ENCODE measurements at regions of chr12 and their contacts with region 1.

Region 1: DNA sequence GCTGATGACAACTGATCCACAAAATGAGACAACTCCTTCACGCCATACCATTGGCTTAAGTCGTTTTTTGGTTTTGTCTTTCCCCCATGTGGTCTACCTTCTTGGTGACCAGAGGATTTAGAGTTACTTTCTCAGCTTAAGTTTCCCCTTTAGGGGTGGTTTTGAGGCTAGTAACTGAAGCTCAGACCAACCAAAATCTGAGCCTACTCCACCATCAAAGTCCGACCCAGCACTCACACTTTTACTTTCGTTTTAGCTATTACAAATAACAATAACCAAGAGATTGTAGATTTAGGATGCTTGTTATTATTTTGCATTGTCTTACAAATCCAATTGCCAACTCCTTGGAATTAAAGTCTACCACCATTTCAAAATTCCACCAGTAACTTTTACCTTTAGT is 130.6 kb upstream of the MDM1 start:
- DNase-seq: peak in 1 of 35 experiments; percentile 51
- ATAC-seq: peak in 2 of 4 experiments; percentile 38 to 62
- H3K4me3 ChIP-seq: peak overlapping the region; percentile 25 to 42
- H3K4me3 Mint-ChIP-seq: peak overlapping the region; percentile 76 to 83 (median 76)
- H3K27ac ChIP-seq: peak overlapping the region; percentile 59
- H3K27ac Mint-ChIP-seq: peak overlapping the region; percentile 92 to 94
- H3K4me1 ChIP-seq: peaks cover 0 to 4% of the 10 kb centered on the region in 2 experiments
- H3K4me1 Mint-ChIP-seq: peaks cover 16 to 24% (median 21%) of the 10 kb centered on the region in 3 donors
- H3K27me3 ChIP-seq: no peaks in the 10 kb centered on the region
- H3K27me3 Mint-ChIP-seq: no peaks in the 10 kb centered on the region

Region 2: DNA sequence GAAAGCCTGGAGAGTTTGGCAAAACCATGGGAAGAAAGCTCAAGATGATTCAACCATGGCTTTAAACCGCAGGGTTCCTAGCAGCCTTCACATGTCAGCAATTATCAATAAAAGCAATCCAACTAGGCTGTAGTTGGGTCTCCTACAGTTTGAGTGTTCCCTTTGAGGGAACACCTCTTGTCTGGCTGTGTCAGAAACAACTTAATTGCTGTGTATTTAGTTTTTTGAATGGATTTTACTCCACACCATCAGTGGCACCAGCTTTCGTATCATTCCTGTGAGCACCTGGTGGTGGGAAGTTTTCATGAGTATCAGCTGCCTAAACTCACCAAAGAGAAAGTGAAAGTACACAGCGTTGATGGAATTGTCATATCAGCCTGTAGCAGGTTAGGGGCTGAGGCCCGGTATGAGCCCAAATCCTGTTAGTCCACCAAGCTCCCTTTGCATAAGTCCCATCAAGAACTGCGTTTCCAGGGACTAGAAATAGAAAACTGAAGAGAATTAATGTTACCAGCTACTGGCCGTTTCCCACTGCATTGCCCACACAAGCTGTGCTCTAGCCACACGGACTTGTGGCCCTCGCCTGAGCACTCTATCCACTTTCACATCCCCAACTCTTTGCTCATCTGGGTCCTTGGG is 226.3 kb before region 1 on chr12:
- CTCF ChIA-PET with region 1: no interaction called
- POLR2A ChIA-PET with region 1: interaction called in 1 of 2 experiments, 10 read pairs
- DNase-seq: peak in 32 of 35 experiments; percentile 6 to 80 (median 18)
- ATAC-seq: peak; percentile 73 to 78 (median 75)
- H3K4me3 ChIP-seq: peak overlapping the region; percentile 42 to 49
- H3K4me3 Mint-ChIP-seq: peak overlapping the region; percentile 84 to 86 (median 85)
- H3K27ac ChIP-seq: peak overlapping the region; percentile 52
- H3K27ac Mint-ChIP-seq: peak overlapping the region; percentile 91 to 97
- H3K4me1 ChIP-seq: peaks cover 18 to 26% of the 10 kb centered on the region in 2 experiments
- H3K4me1 Mint-ChIP-seq: peaks cover 48 to 56% (median 50%) of the 10 kb centered on the region in 3 donors
- H3K27me3 ChIP-seq: no peaks in the 10 kb centered on the region
- H3K27me3 Mint-ChIP-seq: no peaks in the 10 kb centered on the region

Region 3: DNA sequence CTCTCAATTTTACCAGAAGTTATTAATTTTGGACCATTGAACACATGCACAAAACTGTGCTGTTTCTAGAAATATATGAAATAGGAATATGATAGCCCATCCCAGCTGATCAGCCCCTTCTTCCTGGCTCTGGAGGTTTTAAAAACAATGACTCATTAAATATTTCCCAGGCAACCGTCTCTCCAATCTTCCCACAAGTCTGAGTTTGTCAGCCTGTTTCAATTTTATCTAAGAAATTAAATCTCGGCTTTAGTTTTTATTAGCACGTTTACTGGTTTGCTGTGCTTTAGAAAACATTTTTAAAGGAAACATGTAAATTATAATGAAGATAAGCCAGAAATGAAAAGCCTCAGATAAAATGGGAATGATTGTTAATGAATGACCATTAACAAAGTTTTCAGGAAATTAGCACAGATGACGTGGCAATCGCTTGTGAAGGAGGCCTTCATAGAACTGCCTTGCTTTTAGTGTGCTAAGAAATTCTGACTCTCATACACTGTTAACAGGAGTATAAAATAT is 58.6 kb after region 1 on chr12:
- CTCF ChIA-PET with region 1: no interaction called
- POLR2A ChIA-PET with region 1: no interaction called
- DNase-seq: no peak
- ATAC-seq: no peak
- H3K4me3 ChIP-seq: no peak overlapping the region
- H3K4me3 Mint-ChIP-seq: no peak overlapping the region
- H3K27ac ChIP-seq: no peak overlapping the region
- H3K27ac Mint-ChIP-seq: no peak overlapping the region
- H3K4me1 ChIP-seq: no peaks in the 10 kb centered on the region
- H3K4me1 Mint-ChIP-seq: peaks cover 0 to 5% (median 0%) of the 10 kb centered on the region in 3 donors
- H3K27me3 ChIP-seq: no peaks in the 10 kb centered on the region
- H3K27me3 Mint-ChIP-seq: no peaks in the 10 kb centered on the region

Region 4: DNA sequence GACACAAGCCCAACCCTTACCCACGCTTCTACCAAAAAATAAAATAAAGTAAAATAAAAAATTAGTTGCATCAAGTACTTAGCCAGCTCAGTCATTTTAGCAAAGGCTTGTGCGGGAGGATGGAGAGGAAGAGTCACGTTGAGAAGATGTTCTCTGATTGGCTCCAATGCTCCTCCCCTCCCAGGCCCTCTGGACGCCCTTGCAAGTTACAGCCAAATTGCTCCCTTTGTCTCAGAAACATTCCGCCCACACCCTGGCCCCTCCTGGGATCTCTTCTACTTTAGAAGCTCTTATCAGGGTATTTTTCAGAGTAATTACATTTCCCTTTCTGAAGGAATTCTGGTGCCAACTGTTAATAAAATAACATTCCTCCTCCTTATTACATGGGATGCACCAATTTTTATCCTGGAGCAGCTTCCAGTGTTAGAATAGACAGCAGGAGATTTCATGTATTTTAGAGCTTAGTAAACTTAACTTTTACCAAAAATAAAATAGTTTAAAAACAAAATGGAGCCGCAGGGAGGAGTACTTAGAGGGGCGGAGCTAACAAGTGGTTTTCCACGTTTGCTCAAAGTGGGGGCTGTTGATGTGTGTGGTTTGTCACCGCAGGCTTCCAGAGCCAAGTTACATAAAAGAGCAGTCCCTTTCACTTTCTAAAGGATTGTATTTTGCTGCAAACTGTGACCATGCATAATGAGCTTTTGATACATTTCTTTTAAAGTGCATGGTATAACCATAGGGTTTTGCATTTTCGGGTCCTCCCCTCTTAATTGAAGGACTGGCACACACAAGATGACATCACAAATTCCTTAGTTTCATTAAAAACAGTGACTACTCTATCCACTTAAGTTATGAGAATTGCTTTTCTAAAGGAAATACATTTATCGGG is 76.2 kb after region 1 on chr12:
- CTCF ChIA-PET with region 1: interaction called in 1 of 2 experiments, 10 read pairs
- POLR2A ChIA-PET with region 1: no interaction called
- DNase-seq: peak in 33 of 35 experiments; percentile 21 to 82 (median 59)
- ATAC-seq: peak; percentile 89 to 97 (median 92)
- H3K4me3 ChIP-seq: peak overlapping the region in 1 of 2 donors; percentile 3
- H3K4me3 Mint-ChIP-seq: peak overlapping the region; percentile 63 to 68 (median 65)
- H3K27ac ChIP-seq: peak overlapping the region; percentile 47
- H3K27ac Mint-ChIP-seq: peak overlapping the region; percentile 88 to 89
- H3K4me1 ChIP-seq: peaks cover 14 to 38% of the 10 kb centered on the region in 2 experiments
- H3K4me1 Mint-ChIP-seq: peaks cover 52 to 60% (median 55%) of the 10 kb centered on the region in 3 donors
- H3K27me3 ChIP-seq: no peaks in the 10 kb centered on the region
- H3K27me3 Mint-ChIP-seq: no peaks in the 10 kb centered on the region

Region 5: GRCh38 chr12:68915055-68915454 is 452.3 kb after region 1 on chr12:
- CTCF ChIA-PET with region 1: no interaction called
- POLR2A ChIA-PET with region 1: no interaction called
- DNase-seq: no peak
- ATAC-seq: no peak
- H3K4me3 ChIP-seq: no peak overlapping the region
- H3K4me3 Mint-ChIP-seq: no peak overlapping the region
- H3K27ac ChIP-seq: no peak overlapping the region
- H3K27ac Mint-ChIP-seq: no peak overlapping the region
- H3K4me1 ChIP-seq: no peaks in the 10 kb centered on the region
- H3K4me1 Mint-ChIP-seq: peaks cover 2 to 6% (median 5%) of the 10 kb centered on the region in 3 donors
- H3K27me3 ChIP-seq: no peaks in the 10 kb centered on the region
- H3K27me3 Mint-ChIP-seq: no peaks in the 10 kb centered on the region

Measured in T-cell (primary cell).